ENCODE measurements at regions of chr1 and their contacts with region 1.

Region 1: GRCh38 chr1:23577056-23578004 is 18.0 kb upstream of the ID3 start:
- DNase-seq: peak; percentile 70
- ATAC-seq: peak; percentile 89
- H3K4me3 Mint-ChIP-seq: peak overlapping the region; percentile 48
- H3K27ac Mint-ChIP-seq: peak overlapping the region; percentile 90
- H3K4me1 Mint-ChIP-seq: peaks cover 65% of the 10 kb centered on the region
- H3K27me3 Mint-ChIP-seq: no peaks in the 10 kb centered on the region

Region 2: GRCh38 chr1:23591460-23592208 is 14.3 kb after region 1 on chr1:
- CTCF ChIA-PET with region 1: interaction called, 19 read pairs
- POLR2A ChIA-PET with region 1: interaction called, 8 read pairs
- DNase-seq: peak; percentile 70
- ATAC-seq: peak; percentile 76
- H3K4me3 Mint-ChIP-seq: peak overlapping the region; percentile 43
- H3K27ac Mint-ChIP-seq: peak overlapping the region; percentile 91
- H3K4me1 Mint-ChIP-seq: peaks cover 78% of the 10 kb centered on the region
- H3K27me3 Mint-ChIP-seq: no peaks in the 10 kb centered on the region

Region 3: DNA sequence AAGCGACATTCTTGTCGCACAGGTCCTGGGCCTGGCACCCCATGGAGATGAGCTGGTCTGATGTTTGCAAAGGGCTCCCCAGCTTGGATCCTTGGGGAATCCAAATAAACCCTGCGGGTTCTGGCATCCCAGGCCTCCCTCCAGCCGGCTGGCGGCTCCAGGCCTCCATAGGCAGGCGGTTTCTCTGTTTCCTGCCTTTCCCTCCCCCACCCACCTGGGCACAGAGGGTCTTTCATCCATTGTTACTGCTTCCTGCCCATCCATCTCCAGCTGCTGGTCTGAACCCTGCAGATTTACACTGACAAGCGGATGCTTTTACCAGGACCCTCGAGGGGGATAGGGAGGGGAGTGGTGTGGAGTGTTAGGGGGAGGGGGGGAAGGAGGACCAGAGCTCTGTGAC is 21.1 kb after region 1 on chr1:
- CTCF ChIA-PET with region 1: interaction called, 22 read pairs
- POLR2A ChIA-PET with region 1: interaction called, 20 read pairs
- DNase-seq: no peak
- ATAC-seq: no peak
- H3K4me3 Mint-ChIP-seq: no peak overlapping the region
- H3K27ac Mint-ChIP-seq: peak overlapping the region; percentile 51
- H3K4me1 Mint-ChIP-seq: peaks cover 93% of the 10 kb centered on the region
- H3K27me3 Mint-ChIP-seq: no peaks in the 10 kb centered on the region

Region 4: DNA sequence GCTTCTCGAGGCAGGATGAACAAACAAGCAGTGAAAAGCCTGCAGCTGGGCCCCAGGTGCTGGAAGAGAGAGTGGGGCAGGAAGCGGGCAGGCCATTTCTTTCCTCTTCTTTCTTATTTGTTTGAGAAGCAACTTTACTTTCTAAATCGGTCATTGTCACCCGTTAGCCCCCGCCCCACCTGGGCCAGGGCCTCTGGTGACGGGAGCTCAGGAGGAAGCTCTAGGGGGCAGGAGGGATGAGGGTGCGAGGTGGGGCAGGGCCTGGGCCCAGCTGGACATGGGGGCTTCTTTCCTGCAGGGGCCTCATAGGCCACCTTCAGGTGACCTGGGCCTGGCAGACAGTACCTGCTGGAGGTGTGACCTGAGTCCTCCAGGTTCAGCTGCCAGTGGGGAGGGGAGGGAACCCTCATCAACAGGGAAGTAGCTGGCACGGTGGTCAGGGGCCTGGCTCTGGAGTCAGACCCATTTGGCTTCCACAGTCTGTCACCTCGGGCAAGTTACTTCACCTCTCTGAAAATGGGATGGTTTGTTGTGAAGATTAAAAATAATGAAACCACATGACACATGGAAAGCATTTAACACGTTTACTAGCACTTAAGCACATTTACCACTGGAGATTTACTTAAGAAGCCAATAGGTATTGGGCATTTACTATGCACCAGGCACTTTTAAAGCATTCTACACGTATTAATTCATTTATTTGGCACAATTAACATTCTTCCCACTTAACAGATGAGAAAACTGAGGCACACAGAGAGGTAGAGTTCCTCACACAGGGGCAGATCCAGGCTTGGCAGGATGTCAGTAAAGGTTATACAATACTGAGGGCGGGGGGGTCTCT is 36.1 kb after region 1 on chr1:
- CTCF ChIA-PET with region 1: interaction called, 18 read pairs
- POLR2A ChIA-PET with region 1: interaction called, 17 read pairs
- DNase-seq: peak; percentile 73
- ATAC-seq: peak; percentile 66
- H3K4me3 Mint-ChIP-seq: peak overlapping the region; percentile 53
- H3K27ac Mint-ChIP-seq: peak overlapping the region; percentile 96
- H3K4me1 Mint-ChIP-seq: peaks cover 68% of the 10 kb centered on the region
- H3K27me3 Mint-ChIP-seq: no peaks in the 10 kb centered on the region

Region 5: DNA sequence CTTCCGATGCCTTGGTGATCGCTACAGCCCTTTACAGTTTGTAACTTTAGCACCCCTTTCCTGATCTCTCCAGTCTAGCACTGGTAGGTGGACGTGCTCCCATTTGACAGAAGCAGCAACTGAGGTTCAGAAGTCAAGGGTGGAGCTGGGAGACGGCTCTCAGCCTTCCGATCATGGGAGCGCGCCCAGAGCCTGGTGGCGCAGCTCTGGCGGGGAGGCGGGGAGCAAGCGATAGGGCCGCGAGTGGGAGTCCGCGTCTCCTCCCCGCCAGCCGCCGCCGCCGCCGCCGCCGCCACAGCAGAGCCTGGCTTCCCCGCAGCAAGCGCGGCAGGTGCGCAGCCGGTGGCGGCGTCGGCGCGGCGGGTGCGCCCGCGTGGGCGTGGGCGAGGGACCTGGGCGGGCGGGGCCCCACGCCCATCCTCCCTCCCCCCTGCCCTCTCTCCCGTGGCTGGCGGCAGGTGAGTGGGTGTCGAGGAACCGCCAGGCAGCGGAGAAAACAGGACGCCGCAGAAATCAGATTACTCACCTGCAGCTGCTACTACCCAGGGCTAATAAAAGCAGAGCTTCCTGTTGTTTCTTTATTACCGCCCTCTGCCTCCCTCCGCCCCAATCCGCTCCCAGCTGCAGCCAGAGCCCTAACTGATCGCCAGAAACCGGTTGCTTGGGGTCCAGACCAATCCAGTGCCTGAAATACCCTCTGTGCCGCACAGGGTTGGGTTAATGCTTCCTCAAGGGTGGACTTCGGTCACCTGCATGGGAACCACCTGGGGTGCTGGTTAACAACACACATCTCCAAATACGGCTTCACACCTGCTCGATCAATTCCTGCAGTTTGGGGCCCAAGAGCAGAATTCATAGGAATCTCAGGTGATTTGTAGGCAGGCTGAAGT is 42.2 kb after region 1 on chr1:
- CTCF ChIA-PET with region 1: interaction called, 15 read pairs
- POLR2A ChIA-PET with region 1: interaction called, 5 read pairs
- DNase-seq: peak; percentile 80
- ATAC-seq: peak; percentile 77
- H3K4me3 Mint-ChIP-seq: peak overlapping the region; percentile 75
- H3K27ac Mint-ChIP-seq: peak overlapping the region; percentile 81
- H3K4me1 Mint-ChIP-seq: peaks cover 72% of the 10 kb centered on the region
- H3K27me3 Mint-ChIP-seq: no peaks in the 10 kb centered on the region

Measured in activated CD8-positive, alpha-beta T cell treated with anti-CD3 and anti-CD28 coated beads, Interleukin-2, amount 10 ng/mL, durations not matched to agents 7 days and 5 days (primary cell).